Activated CD4-positive, alpha-beta T cell treated with anti-CD3 and anti-CD28 coated beads, Interleukin-2, amount 10 ng/mL, durations not matched to agents 24 days and 14 days (primary cell): ENCODE measurements at regions of chr2 and their contacts with region 1.

Region 1: GRCh38 chr2:113157118-113157896 is 16.5 kb upstream of the PSD4 start:
- DNase-seq: peak; percentile 87
- H3K4me3 Mint-ChIP-seq: peak overlapping the region; percentile 86
- H3K27ac Mint-ChIP-seq: peak overlapping the region; percentile 87
- H3K4me1 Mint-ChIP-seq: peaks cover 19% of the 10 kb centered on the region
- H3K27me3 Mint-ChIP-seq: peaks cover 3% of the 10 kb centered on the region

Region 2: GRCh38 chr2:113173542-113174395 is 16.5 kb after region 1 on chr2 and contains the start of gene PSD4:
- intact Hi-C with region 1: loop called (anchors 1 kb)
- DNase-seq: peak; percentile 96
- H3K4me3 Mint-ChIP-seq: peak within 1 kb of the TSS; percentile 88
- H3K27ac Mint-ChIP-seq: peak within 1 kb of the TSS; percentile 92
- H3K4me1 Mint-ChIP-seq: peaks cover 66% of the 10 kb centered on the region
- H3K27me3 Mint-ChIP-seq: no peaks in the 10 kb centered on the region
- total RNA-seq, gene PSD4: 268 and 278 TPM in 2 replicates

Region 3: DNA sequence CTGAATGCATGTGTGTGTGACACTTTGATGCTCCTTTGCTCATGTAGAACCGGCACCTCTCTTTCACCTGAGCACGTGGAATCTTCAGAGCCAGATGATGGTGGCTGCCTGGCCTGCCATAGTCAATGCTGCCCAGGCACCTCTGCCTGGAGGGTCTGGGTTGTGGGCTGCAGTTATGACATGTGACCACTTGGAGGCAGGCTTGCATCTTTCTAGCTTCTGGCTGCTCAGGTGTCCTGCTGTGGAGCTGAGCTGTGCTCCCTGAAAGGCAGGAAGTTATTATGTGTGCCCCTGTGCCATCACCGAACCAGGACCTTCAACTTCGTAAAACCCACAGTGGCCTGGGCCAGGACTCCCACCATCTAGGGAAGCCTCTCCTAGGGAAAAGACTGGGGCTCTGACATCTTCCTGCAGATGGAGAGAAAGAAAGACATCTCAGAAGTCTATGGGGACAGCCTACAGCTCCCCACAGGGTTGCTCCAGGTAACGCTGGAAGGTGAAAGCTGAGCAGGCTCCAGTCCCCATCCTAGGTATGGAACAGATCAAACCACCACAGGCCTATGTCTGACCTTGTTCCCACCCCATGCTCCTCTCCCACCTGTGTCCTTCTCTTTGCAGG is 46.7 kb after region 1 on chr2:
- intact Hi-C with region 1: no loop called
- DNase-seq: peak; percentile 92
- H3K4me3 Mint-ChIP-seq: no peak overlapping the region
- H3K27ac Mint-ChIP-seq: peak overlapping the region; percentile 76
- H3K4me1 Mint-ChIP-seq: peaks cover 17% of the 10 kb centered on the region
- H3K27me3 Mint-ChIP-seq: no peaks in the 10 kb centered on the region

Region 4: DNA sequence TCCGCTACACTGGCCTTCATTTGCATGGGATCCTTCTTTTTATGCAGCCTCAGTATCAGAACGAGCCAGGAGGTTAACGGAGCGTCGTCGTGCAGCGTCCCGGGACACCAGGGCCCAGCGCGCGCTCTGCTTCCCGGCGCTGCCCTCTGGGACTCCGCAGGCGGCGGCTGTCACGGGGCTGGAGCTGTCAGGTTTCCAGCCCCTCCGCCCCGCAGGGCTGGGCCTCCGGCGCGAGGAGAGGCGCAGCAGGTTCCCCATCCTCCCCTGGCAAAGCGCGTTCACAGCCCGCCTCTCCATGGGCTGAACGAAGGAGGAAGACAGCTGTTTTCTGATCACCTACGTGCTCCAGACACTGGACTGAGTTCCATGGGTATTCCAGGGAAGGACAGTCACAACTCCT is 133.9 kb after region 1 on chr2:
- intact Hi-C with region 1: no loop called
- DNase-seq: no peak
- H3K4me3 Mint-ChIP-seq: no peak overlapping the region
- H3K27ac Mint-ChIP-seq: no peak overlapping the region
- H3K4me1 Mint-ChIP-seq: no peaks in the 10 kb centered on the region
- H3K27me3 Mint-ChIP-seq: peaks cover 50% of the 10 kb centered on the region